Left lung (tissue), 14 donors: ENCODE measurements at regions of chr4 and their contacts with region 1.

Region 1: DNA sequence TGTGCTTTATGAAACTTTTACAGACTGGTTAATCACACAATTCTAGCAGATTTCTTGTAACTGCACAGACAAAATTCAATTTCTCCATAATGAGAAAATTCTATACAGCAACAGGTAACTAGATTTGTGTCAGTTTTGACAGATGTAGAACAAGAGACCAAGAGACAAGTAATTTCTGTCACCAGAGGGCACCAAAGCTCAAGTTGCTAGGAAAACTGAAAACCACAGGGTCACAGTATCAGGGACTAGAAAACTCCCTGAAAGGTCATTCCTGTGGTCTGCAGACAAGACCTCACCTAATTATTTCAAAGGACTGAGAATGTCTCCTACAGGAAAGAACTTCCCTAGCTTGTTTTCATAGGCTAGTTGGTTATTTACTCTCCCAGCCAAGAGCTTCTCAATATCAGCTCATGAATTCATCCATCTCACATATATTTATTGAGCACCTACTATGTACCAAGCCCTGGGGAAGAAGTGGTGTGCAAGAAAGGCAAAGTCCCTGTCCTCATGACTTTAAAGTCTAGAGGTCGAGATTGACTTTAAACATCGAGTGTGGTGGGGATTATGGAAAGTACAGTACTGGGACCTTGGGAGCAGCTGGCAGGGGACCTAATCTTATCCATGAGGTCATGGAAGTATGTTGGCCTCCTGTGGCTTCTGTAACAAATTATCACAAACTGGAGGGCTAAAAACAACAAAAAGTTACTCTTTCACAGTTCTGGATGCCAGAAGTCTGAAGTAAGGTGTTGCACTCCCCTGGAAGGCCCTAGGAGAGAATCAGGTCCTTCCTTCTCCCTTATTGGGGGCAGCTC is 47.8 kb upstream of the SETD7 start:
- DNase-seq: peak in 2 of 4 donors; percentile 40 to 62
- ATAC-seq: peak; percentile 75
- H3K4me3 ChIP-seq: no peak overlapping the region
- H3K27ac ChIP-seq: no peak overlapping the region
- H3K4me1 ChIP-seq: no peaks in the 10 kb centered on the region
- H3K27me3 ChIP-seq: no peaks in the 10 kb centered on the region
- CTCF ChIP-seq: peak; percentile 51 to 57

Region 2: DNA sequence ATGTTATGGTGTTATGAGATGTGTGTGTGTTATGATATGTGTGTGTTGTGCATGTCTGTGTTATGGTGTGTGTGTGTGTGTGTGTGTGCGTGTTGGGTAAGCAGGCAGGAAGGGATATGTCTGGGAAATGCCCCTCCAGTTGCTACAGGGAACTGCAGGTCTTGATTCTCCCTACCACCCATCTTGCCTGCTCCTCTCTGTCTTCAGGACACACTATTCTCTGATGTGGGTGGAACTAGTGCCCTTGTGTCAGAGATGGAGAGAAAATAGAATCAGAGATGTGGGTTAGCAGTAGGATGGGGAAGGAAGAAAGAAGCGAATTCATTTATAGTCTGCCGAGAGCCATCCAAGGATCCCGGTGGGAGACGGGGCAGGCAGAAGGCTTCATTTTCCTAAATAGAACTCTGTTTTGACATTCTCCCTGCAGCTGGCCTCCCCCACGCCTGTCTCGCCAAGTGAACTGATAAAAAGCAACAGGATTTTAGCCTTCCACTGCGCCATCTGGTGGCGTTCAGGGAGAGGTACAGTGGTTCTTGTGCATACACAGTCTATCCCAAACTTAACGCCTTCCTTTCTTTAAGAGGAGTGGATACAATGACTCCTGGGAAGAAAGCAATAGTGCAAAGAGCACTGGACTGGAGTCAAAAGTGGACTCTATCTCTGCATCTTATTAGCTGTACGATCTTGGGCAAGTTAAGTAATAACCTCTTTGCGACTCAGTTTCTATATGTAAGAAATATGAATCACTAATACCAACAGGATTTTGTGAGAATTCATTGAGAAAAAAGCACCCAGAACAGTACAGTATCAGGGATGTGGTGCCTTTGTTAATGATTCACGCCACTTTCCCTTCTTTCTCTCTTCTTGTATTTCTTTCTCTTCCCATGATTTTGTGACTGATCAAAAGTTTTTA is 47.8 kb after region 1 on chr4:
- intact Hi-C with region 1: loop called in 1 of 2 experiments (anchors 10 kb)
- DNase-seq: peak in 3 of 4 donors; percentile 81 to 93 (median 87)
- ATAC-seq: peak; percentile 96
- H3K4me3 ChIP-seq: no peak overlapping the region
- H3K27ac ChIP-seq: no peak overlapping the region
- H3K4me1 ChIP-seq: peaks cover 0 to 2% of the 10 kb centered on the region in 2 donors
- H3K27me3 ChIP-seq: no peaks in the 10 kb centered on the region
- CTCF ChIP-seq: peak; percentile 93